CD8-positive, alpha-beta T cell (primary cell): ENCODE measurements at regions of chr3 and their contacts with region 1.

Region 1: DNA sequence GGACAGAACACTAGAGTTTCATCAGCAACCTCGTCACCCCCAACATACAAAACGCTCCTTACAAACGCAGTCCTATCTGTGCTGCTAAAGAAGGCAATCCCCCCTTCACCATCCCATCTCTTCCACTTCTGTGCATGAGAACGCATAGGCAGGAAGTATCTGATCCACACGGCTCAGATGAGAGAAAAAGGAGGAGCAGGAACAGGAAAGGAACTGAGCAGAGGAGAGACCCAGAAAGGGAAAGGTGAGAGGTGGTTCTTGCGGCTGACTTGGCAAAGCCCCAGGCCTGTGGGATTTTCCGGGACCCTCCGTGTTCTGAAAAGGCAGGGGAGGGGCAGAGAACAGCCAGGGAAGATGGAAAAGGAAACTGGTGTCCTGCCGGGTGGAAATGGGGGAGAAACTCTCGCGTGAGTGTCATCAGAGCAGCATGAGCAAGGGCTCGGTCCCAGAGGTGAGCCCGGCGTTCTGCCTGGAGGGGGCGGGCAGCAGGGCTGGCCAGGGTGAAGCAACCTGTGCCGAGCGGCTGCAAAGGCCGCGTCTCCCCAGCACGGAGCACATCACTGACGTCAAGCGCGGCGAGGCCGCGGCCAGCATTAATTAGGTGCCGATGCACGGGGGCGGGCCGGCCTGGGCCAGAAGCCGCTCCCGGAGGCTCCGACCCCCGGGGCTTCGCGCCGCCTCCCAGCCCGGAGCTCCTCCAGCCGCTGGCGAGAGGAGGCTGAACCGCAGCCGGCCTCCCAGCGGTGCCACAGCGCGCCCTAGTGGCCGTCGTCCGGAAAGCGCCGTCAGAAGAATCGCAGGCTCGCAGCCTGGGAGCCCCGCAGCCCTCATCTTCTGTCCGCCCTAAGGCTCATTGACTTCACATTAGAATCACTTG is 35.8 kb downstream of the CPN2 start:
- DNase-seq: peak; percentile 66 to 90 (median 84)
- ATAC-seq: peak; percentile 87
- H3K4me3 ChIP-seq: peak overlapping the region; percentile 47 to 54
- H3K4me3 Mint-ChIP-seq: peak overlapping the region; percentile 79
- H3K27ac ChIP-seq: no peak overlapping the region
- H3K27ac Mint-ChIP-seq: no peak overlapping the region
- H3K4me1 ChIP-seq: peaks cover 11% of the 10 kb centered on the region
- H3K4me1 Mint-ChIP-seq: peaks cover 11% of the 10 kb centered on the region
- H3K27me3 ChIP-seq: peaks cover 7 to 17% of the 10 kb centered on the region in 2 experiments
- H3K27me3 Mint-ChIP-seq: peaks cover 36% of the 10 kb centered on the region
- CTCF ChIP-seq: peak; percentile 98

Region 2: DNA sequence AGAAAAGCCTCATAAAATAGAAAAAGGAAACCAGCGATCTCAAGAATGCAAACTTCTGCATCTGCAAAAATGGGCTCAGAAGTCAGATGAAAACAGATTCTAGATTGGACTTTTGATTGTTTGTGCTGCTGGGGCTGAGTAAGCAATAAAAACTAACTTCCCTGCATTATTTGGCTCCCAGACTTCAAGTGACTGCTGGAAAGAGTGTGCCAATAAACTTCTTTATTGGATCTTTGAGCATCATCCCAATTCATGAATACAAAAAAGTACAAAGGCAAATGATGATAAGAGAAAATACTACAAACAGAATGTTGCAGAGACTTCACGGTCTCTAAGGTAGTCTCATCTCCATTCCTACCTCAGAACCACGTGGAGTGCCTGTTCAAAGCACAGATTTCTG is 1685.9 kb before region 1 on chr3:
- CTCF ChIA-PET with region 1: no interaction called
- POLR2A ChIA-PET with region 1: no interaction called
- intact Hi-C with region 1: no loop called
- DNase-seq: no peak
- ATAC-seq: no peak
- H3K4me3 ChIP-seq: no peak overlapping the region
- H3K4me3 Mint-ChIP-seq: no peak overlapping the region
- H3K27ac ChIP-seq: no peak overlapping the region
- H3K27ac Mint-ChIP-seq: no peak overlapping the region
- H3K4me1 ChIP-seq: no peaks in the 10 kb centered on the region
- H3K4me1 Mint-ChIP-seq: no peaks in the 10 kb centered on the region
- H3K27me3 ChIP-seq: no peaks in the 10 kb centered on the region
- H3K27me3 Mint-ChIP-seq: no peaks in the 10 kb centered on the region
- CTCF ChIP-seq: no peak

Region 3: DNA sequence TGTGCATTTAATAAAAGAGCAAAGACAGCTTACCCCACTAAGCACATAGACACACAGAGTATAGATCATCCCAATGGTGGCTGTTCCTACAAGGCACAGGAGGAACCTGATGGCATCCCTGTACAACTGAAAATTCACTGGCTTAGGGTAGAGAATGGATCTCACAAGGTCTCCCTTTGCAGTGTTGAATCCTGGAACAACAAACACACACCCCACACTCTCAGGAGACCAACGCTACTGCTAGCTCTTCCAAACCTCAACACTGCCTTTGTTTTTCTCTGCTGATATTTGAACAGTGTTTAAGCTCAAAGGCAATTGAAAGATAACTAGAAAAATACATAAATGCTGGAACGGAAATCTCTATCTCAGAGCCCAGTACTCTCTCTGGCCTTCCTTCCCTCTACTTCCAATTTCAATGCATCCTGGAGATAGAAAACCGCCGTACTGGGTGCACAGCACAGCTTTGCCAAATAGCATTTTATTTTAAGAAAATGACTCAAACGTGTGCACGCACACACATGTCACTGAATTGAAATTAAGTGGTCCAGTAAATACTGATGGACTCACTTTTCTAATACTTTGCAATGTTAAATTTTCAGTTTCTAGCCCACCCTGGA is 849.2 kb before region 1 on chr3:
- CTCF ChIA-PET with region 1: no interaction called
- POLR2A ChIA-PET with region 1: no interaction called
- intact Hi-C with region 1: loop called in 1 of 2 experiments (anchors 5 kb)
- DNase-seq: no peak
- ATAC-seq: no peak
- H3K4me3 ChIP-seq: no peak overlapping the region
- H3K4me3 Mint-ChIP-seq: no peak overlapping the region
- H3K27ac ChIP-seq: no peak overlapping the region
- H3K27ac Mint-ChIP-seq: no peak overlapping the region
- H3K4me1 ChIP-seq: no peaks in the 10 kb centered on the region
- H3K4me1 Mint-ChIP-seq: no peaks in the 10 kb centered on the region
- H3K27me3 ChIP-seq: no peaks in the 10 kb centered on the region
- H3K27me3 Mint-ChIP-seq: no peaks in the 10 kb centered on the region
- CTCF ChIP-seq: no peak

Region 4: GRCh38 chr3:193665370-193665989 is 649.8 kb before region 1 on chr3:
- CTCF ChIA-PET with region 1: interaction called, 36 read pairs
- POLR2A ChIA-PET with region 1: no interaction called
- intact Hi-C with region 1: loop called (anchors 1 kb)
- DNase-seq: peak in 2 of 9 experiments; percentile 34 to 53
- ATAC-seq: no peak
- H3K4me3 ChIP-seq: no peak overlapping the region
- H3K4me3 Mint-ChIP-seq: no peak overlapping the region
- H3K27ac ChIP-seq: no peak overlapping the region
- H3K27ac Mint-ChIP-seq: no peak overlapping the region
- H3K4me1 ChIP-seq: no peaks in the 10 kb centered on the region
- H3K4me1 Mint-ChIP-seq: no peaks in the 10 kb centered on the region
- H3K27me3 ChIP-seq: no peaks in the 10 kb centered on the region
- H3K27me3 Mint-ChIP-seq: no peaks in the 10 kb centered on the region
- CTCF ChIP-seq: peak; percentile 76

Region 5: DNA sequence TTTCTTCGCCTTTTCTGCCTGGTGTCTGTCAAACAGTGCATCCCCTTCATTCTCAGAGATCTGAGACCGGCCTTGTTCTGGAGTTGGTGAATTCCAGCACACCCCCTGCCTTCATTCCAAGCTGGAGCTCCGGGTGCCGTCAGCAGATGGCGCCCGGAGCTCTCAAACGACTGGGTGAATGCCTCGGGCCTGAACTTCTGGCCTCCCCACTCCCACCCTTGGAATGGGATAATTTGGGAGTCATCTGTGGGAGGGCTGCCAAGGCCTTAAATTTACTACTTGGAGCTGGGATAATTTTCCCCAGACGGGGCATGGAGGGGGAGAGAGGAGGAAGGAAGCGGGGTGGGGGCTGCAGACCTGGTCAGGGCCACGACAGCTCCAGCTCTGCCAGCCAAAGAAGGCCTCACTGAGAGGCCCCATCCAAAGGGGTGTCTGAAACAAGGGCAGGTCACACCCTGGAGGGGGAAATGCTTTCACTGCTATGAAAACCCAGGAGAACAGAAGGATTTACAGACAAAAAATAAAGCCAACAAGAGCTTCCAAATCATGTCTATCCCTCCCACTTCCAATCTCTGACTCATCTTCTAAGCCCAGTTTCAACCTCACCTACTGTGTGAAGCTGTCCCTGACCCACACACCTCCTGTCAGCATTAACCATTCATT is 534.4 kb before region 1 on chr3:
- CTCF ChIA-PET with region 1: interaction called, 34 read pairs
- POLR2A ChIA-PET with region 1: no interaction called
- intact Hi-C with region 1: loop called (anchors 1 kb)
- DNase-seq: peak in 3 of 9 experiments; percentile 13 to 38 (median 22)
- ATAC-seq: no peak
- H3K4me3 ChIP-seq: no peak overlapping the region
- H3K4me3 Mint-ChIP-seq: no peak overlapping the region
- H3K27ac ChIP-seq: no peak overlapping the region
- H3K27ac Mint-ChIP-seq: no peak overlapping the region
- H3K4me1 ChIP-seq: no peaks in the 10 kb centered on the region
- H3K4me1 Mint-ChIP-seq: peaks cover 4% of the 10 kb centered on the region
- H3K27me3 ChIP-seq: no peaks in the 10 kb centered on the region
- H3K27me3 Mint-ChIP-seq: peaks cover 29% of the 10 kb centered on the region
- CTCF ChIP-seq: no peak

Region 6: GRCh38 chr3:194134757-194135528 is 180.4 kb before region 1 on chr3:
- CTCF ChIA-PET with region 1: interaction called, 12 read pairs
- POLR2A ChIA-PET with region 1: interaction called, 4 read pairs
- intact Hi-C with region 1: loop called (anchors 2 to 5 kb)
- DNase-seq: peak; percentile 56 to 90 (median 75)
- ATAC-seq: peak; percentile 67
- H3K4me3 ChIP-seq: peak overlapping the region; percentile 41 to 52
- H3K4me3 Mint-ChIP-seq: peak overlapping the region; percentile 86
- H3K27ac ChIP-seq: no peak overlapping the region
- H3K27ac Mint-ChIP-seq: peak overlapping the region; percentile 91
- H3K4me1 ChIP-seq: peaks cover 41% of the 10 kb centered on the region
- H3K4me1 Mint-ChIP-seq: peaks cover 48% of the 10 kb centered on the region
- H3K27me3 ChIP-seq: peaks cover 32 to 40% of the 10 kb centered on the region in 2 experiments
- H3K27me3 Mint-ChIP-seq: peaks cover 65% of the 10 kb centered on the region
- CTCF ChIP-seq: no peak

Region 7: DNA sequence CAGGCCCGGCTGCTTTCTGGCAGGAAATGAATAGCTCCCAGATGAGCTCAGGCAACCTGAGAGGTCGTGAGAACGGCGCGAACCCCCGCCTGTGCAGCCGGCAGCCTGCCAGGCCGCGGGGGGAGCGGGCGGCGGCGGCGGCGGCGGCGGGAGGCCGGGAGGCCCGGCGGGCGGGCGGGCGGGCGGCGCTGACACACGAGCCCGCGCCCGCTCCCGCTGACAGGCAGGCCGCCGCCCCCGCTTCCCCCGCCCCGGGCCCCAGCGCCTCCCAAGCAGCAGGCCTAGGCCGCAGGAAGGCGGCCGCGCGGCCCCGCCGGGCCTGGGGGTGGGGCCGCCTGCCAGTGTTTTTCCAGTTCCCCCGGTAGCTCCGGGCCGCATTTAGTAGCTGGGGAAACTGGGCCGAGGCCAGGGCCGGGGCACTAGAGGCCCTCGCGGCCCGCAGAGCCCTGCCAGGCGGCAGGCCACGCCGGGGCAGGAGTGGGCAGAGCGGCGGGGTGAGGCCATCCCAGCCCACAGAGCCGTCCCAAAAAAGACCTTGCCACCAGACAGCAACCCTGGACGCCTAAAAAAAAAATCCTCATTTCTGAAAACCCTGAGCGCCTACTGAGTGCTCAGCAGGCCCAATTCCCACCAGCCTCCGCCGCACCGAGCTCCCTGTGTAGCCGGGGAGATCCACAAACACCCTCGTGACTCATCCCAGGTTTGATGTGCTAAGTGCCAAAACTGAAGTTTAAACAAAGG is 173.7 kb before region 1 on chr3:
- CTCF ChIA-PET with region 1: interaction called, 9 read pairs
- POLR2A ChIA-PET with region 1: no interaction called
- intact Hi-C with region 1: loop called in 1 of 2 experiments (anchors 5 kb)
- DNase-seq: peak in 8 of 9 experiments; percentile 19 to 70 (median 54)
- ATAC-seq: peak; percentile 53
- H3K4me3 ChIP-seq: peak overlapping the region in 1 of 2 experiments; percentile 28
- H3K4me3 Mint-ChIP-seq: peak overlapping the region; percentile 75
- H3K27ac ChIP-seq: no peak overlapping the region
- H3K27ac Mint-ChIP-seq: no peak overlapping the region
- H3K4me1 ChIP-seq: peaks cover 27% of the 10 kb centered on the region
- H3K4me1 Mint-ChIP-seq: peaks cover 24% of the 10 kb centered on the region
- H3K27me3 ChIP-seq: peaks cover 20 to 22% of the 10 kb centered on the region in 2 experiments
- H3K27me3 Mint-ChIP-seq: peaks cover 50% of the 10 kb centered on the region
- CTCF ChIP-seq: no peak

Region 8: DNA sequence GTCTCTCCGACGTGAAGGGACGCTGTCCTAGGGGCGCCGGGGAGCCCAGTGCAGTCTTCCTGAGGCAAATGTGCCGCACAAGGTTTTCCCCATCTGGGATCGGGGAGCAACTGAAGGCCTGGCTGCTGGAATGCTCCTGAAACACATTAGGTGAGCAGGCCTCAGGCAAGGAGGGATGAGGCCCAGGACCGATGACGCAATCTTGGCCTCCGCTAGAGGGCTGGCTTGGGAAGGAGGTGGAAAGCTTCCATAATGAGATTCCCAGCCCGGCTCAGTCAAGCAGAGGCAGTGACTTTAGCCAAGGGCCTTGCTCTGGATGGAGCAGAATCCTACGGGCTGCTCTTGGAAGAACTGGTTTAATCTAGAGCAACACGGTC is 15.0 kb before region 1 on chr3:
- CTCF ChIA-PET with region 1: interaction called, 34 read pairs
- POLR2A ChIA-PET with region 1: interaction called, 4 read pairs
- intact Hi-C with region 1: no loop called
- DNase-seq: no peak
- ATAC-seq: no peak
- H3K4me3 ChIP-seq: no peak overlapping the region
- H3K4me3 Mint-ChIP-seq: no peak overlapping the region
- H3K27ac ChIP-seq: no peak overlapping the region
- H3K27ac Mint-ChIP-seq: no peak overlapping the region
- H3K4me1 ChIP-seq: peaks cover 9% of the 10 kb centered on the region
- H3K4me1 Mint-ChIP-seq: peaks cover 12% of the 10 kb centered on the region
- H3K27me3 ChIP-seq: peaks cover 0 to 3% of the 10 kb centered on the region in 2 experiments
- H3K27me3 Mint-ChIP-seq: peaks cover 5% of the 10 kb centered on the region
- CTCF ChIP-seq: no peak

Region 9: GRCh38 chr3:194561306-194561974 is 246.1 kb after region 1 on chr3:
- CTCF ChIA-PET with region 1: no interaction called
- POLR2A ChIA-PET with region 1: no interaction called
- intact Hi-C with region 1: no loop called
- DNase-seq: no peak
- ATAC-seq: no peak
- H3K4me3 ChIP-seq: no peak overlapping the region
- H3K4me3 Mint-ChIP-seq: no peak overlapping the region
- H3K27ac ChIP-seq: no peak overlapping the region
- H3K27ac Mint-ChIP-seq: no peak overlapping the region
- H3K4me1 ChIP-seq: no peaks in the 10 kb centered on the region
- H3K4me1 Mint-ChIP-seq: peaks cover 4% of the 10 kb centered on the region
- H3K27me3 ChIP-seq: no peaks in the 10 kb centered on the region
- H3K27me3 Mint-ChIP-seq: peaks cover 2% of the 10 kb centered on the region
- CTCF ChIP-seq: no peak